CD8-positive, alpha-beta T cell (primary cell): ENCODE measurements at regions of chr5 and their contacts with region 1.

Region 1: DNA sequence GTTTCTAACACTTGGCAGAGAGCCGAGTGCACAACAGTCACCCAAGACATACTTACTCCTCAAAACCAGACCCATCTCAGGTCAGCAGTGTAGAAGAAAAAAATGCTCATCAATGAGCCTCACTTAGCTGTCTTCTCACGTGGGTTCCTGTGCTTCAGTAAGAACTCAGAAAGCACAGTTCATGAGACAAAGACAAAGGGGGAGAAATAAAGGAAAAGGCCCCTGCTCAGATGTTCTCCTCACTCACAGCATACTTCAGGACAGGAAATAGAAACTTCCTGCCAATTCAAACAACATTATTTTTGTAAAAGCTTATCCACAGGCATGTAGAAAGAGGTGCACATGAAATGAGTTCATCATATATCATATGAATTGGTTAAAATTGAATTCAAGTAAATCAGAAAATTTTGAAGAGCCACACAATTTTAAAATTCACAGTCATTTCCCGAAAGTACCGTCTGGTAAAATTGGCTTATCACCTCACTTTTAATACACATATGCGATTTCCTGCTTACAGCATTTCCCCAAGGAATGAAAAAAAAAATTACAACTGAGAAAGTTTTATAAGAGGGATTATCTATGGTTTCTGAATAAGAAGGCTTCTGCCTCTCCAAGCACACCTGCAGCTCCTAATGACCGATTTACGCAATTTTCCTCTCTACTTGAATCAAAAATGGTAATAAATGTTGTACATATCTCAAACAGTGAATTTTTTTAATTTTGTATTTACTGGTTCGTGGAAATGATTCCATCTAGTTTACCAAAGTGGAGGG is 328.3 kb downstream of the TMEM167A start:
- DNase-seq: peak in 2 of 9 experiments; percentile 1 to 6
- ATAC-seq: no peak
- H3K4me3 ChIP-seq: no peak overlapping the region
- H3K4me3 Mint-ChIP-seq: no peak overlapping the region
- H3K27ac ChIP-seq: no peak overlapping the region
- H3K27ac Mint-ChIP-seq: peak overlapping the region; percentile 25
- H3K4me1 ChIP-seq: peaks cover 18% of the 10 kb centered on the region
- H3K4me1 Mint-ChIP-seq: peaks cover 21% of the 10 kb centered on the region
- H3K27me3 ChIP-seq: no peaks in the 10 kb centered on the region
- H3K27me3 Mint-ChIP-seq: no peaks in the 10 kb centered on the region
- CTCF ChIP-seq: no peak

Region 2: DNA sequence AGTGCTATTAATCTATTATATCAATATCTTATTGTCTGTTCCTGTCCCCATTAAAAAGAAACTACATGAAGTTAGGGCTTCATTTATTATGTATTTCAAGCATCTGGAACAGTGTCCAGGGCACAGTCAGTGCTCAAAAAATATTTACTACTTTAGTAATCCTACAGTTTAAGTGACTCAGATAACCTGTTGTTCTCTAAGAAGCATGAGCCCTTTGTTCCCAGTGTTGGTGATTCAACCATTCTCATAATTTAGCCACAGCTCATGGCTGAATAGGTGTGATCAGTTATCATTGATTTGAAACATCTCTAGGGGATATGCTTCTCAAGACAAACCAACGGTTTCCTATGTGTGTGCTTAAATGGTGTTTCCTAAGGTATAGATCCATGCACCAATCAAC is 35.6 kb after region 1 on chr5:
- CTCF ChIA-PET with region 1: no interaction called
- POLR2A ChIA-PET with region 1: no interaction called
- intact Hi-C with region 1: loop called in 1 of 2 experiments (anchors 1 kb)
- DNase-seq: no peak
- ATAC-seq: no peak
- H3K4me3 ChIP-seq: no peak overlapping the region
- H3K4me3 Mint-ChIP-seq: no peak overlapping the region
- H3K27ac ChIP-seq: no peak overlapping the region
- H3K27ac Mint-ChIP-seq: no peak overlapping the region
- H3K4me1 ChIP-seq: no peaks in the 10 kb centered on the region
- H3K4me1 Mint-ChIP-seq: no peaks in the 10 kb centered on the region
- H3K27me3 ChIP-seq: no peaks in the 10 kb centered on the region
- H3K27me3 Mint-ChIP-seq: no peaks in the 10 kb centered on the region
- CTCF ChIP-seq: no peak

Region 3: DNA sequence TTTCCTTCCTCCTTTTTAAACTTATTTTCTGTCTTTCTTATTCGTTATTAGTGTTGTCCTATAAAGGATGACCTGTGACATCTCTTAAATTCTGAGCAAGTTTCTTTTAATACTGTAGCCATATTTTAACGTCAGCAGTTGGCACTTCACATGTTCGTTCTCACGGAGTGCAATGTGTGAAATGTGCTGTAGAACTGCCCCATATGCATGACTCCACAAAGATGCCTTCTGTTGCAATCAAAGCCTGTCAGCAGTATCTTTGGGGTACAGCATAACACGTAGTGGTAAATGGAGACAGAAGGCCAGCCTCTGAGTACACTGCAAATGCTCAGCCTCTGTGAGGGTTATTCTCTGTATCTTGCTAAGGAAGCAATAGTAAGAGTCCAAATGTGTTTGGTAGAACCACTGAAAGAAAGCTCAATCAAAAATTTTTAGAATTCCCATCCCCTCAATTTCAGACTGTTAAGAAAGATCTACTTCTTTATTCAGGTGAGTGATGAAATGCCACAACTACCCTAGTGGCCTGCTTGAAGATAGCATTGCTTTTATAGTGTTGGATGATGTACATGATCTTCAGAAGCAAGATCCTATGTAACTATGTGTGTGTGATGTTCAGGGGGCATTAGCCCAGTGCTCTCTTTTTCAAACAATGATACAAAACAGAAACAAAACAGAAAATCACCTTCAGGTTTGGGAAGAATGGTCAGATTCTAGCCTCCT is 50.6 kb after region 1 on chr5:
- CTCF ChIA-PET with region 1: no interaction called
- POLR2A ChIA-PET with region 1: no interaction called
- intact Hi-C with region 1: no loop called
- DNase-seq: no peak
- ATAC-seq: no peak
- H3K4me3 ChIP-seq: no peak overlapping the region
- H3K4me3 Mint-ChIP-seq: no peak overlapping the region
- H3K27ac ChIP-seq: no peak overlapping the region
- H3K27ac Mint-ChIP-seq: no peak overlapping the region
- H3K4me1 ChIP-seq: no peaks in the 10 kb centered on the region
- H3K4me1 Mint-ChIP-seq: no peaks in the 10 kb centered on the region
- H3K27me3 ChIP-seq: no peaks in the 10 kb centered on the region
- H3K27me3 Mint-ChIP-seq: peaks cover 3% of the 10 kb centered on the region
- CTCF ChIP-seq: no peak